Common myeloid progenitor, CD34-positive (primary cell): ENCODE measurements at regions of chr12 and their contacts with region 1.

Region 1: GRCh38 chr12:93397412-93397811 is 19.7 kb downstream of the NUDT4 start:
- DNase-seq: no peak
- H3K4me3 ChIP-seq: no peak overlapping the region
- H3K27ac ChIP-seq: no peak overlapping the region
- H3K4me1 ChIP-seq: no peaks in the 10 kb centered on the region
- H3K27me3 ChIP-seq: no peaks in the 10 kb centered on the region

Region 2: GRCh38 chr12:92987362-92987761 is 410.1 kb before region 1 on chr12:
- CTCF ChIA-PET with region 1: interaction called, 51 read pairs
- POLR2A ChIA-PET with region 1: no interaction called
- DNase-seq: peak; percentile 68 to 84 (median 83)
- H3K4me3 ChIP-seq: peak overlapping the region in 1 of 7 experiments; percentile 21
- H3K27ac ChIP-seq: no peak overlapping the region
- H3K4me1 ChIP-seq: peaks cover 5 to 8% (median 6%) of the 10 kb centered on the region in 4 experiments
- H3K27me3 ChIP-seq: no peaks in the 10 kb centered on the region

Region 3: DNA sequence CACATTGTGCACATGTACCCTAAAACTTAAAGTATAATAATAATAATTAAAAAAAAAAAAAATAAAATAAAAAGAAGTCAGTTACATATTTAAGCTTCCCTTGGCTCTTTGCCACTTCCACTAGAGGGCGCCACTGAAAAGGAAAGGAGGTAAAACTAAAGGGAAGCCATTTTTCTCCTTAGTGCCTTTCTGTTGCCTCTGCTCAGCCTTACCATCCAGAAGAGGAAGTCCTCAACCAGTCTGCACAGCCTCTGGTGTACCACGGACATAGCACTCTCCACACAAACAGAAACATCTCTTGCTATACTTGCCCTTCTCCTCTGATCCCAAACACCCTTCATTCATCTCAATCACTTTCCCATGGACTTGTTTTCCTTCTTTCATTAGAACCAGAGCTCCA is 299.3 kb before region 1 on chr12:
- CTCF ChIA-PET with region 1: interaction called, 21 read pairs
- POLR2A ChIA-PET with region 1: no interaction called
- DNase-seq: peak; percentile 90 to 95 (median 94)
- H3K4me3 ChIP-seq: no peak overlapping the region
- H3K27ac ChIP-seq: no peak overlapping the region
- H3K4me1 ChIP-seq: peaks cover 0 to 8% (median 4%) of the 10 kb centered on the region in 4 experiments
- H3K27me3 ChIP-seq: no peaks in the 10 kb centered on the region

Region 4: DNA sequence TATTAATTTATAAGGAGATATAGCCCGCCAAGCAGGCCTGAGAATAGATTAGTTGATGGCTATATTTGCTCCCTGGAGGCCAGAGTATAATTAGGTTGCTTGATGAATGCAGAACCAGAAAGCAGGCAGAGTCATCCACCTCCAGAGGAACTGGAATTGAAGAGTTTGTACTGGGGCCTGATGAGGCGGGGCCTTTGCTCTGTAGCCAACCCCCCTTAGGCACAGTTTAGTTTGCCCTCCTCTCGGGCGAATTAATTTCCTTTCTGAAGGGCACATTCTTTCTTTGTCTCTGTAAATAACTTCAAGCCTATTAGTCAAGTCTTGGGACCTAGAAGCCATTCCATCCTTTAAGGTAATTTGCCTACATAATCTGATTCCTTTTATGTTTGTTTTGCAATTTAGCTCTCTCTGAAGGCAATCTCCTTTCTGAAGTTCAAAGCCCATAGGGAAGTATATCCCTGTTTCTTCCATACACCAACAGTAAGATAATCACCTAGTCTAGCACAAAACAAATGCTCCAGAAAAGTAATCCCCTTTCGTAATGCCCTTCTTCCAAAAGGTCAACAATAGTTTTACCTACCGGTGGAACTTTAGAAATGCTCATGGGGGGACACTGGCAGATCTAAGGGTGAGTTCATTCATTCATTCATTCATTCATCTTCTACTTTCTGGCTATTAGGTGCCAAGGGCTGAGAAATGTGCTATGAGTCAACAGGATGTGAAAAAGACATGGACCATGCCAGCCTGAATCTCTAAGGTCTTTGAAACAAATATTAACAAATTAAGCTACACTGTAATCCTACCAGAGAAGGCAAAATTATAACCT is 104.5 kb before region 1 on chr12:
- CTCF ChIA-PET with region 1: no interaction called
- POLR2A ChIA-PET with region 1: no interaction called
- DNase-seq: no peak
- H3K4me3 ChIP-seq: no peak overlapping the region
- H3K27ac ChIP-seq: no peak overlapping the region
- H3K4me1 ChIP-seq: no peaks in the 10 kb centered on the region
- H3K27me3 ChIP-seq: no peaks in the 10 kb centered on the region

Region 5: GRCh38 chr12:93380480-93381121 is 16.8 kb before region 1 on chr12:
- CTCF ChIA-PET with region 1: interaction called, 38 read pairs
- POLR2A ChIA-PET with region 1: no interaction called
- DNase-seq: peak; percentile 41 to 51 (median 47)
- H3K4me3 ChIP-seq: peak overlapping the region in 6 of 7 experiments; percentile 36 to 98 (median 66)
- H3K27ac ChIP-seq: peak overlapping the region in 1 of 2 experiments; percentile 91
- H3K4me1 ChIP-seq: peaks cover 25 to 46% (median 32%) of the 10 kb centered on the region in 4 experiments
- H3K27me3 ChIP-seq: no peaks in the 10 kb centered on the region

Region 6: GRCh38 chr12:93434256-93434865 is 36.9 kb after region 1 on chr12:
- CTCF ChIA-PET with region 1: no interaction called
- POLR2A ChIA-PET with region 1: no interaction called
- DNase-seq: no peak
- H3K4me3 ChIP-seq: peak overlapping the region in 1 of 7 experiments; percentile 33
- H3K27ac ChIP-seq: no peak overlapping the region
- H3K4me1 ChIP-seq: peaks cover 3 to 39% (median 26%) of the 10 kb centered on the region in 4 experiments
- H3K27me3 ChIP-seq: no peaks in the 10 kb centered on the region